Calu3 (cell line): ENCODE measurements at regions of chrX and their contacts with region 1.

Region 1: GRCh38 chrX:110204986-110205385 is 112.9 kb downstream of the AMMECR1 start:
- DNase-seq: no peak
- H3K4me3 Mint-ChIP-seq: no peak overlapping the region
- H3K27ac Mint-ChIP-seq: no peak overlapping the region
- H3K4me1 Mint-ChIP-seq: peaks cover 13% of the 10 kb centered on the region
- H3K27me3 Mint-ChIP-seq: no peaks in the 10 kb centered on the region
- CTCF ChIP-seq: no peak

Region 2: DNA sequence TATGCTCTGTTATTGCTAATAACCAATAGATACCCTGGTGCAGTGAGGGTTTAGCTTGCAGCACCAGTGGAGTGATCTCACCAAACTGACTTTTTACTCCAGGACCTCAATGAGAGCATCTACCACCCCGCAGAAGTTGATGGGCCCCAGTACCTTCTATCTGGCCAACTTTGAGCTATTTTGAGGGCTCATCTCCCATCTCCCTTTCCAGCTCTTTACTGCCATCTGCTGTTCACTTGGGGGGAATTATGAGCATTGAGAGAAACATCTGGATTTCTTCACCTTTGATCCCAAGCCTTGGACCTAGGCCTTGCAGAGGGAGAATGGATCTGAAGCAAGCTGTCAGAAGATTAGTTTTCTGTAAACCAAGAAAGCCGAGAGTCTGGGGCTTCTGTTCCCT is 58.5 kb before region 1 on chrX:
- CTCF ChIA-PET with region 1: no interaction called
- intact Hi-C with region 1: no loop called
- DNase-seq: peak; percentile 28
- H3K4me3 Mint-ChIP-seq: no peak overlapping the region
- H3K27ac Mint-ChIP-seq: no peak overlapping the region
- H3K4me1 Mint-ChIP-seq: peaks cover 6% of the 10 kb centered on the region
- H3K27me3 Mint-ChIP-seq: no peaks in the 10 kb centered on the region
- CTCF ChIP-seq: no peak

Region 3: GRCh38 chrX:110267874-110268273 is 62.9 kb after region 1 on chrX:
- CTCF ChIA-PET with region 1: no interaction called
- intact Hi-C with region 1: loop called (anchors 2 kb)
- DNase-seq: no peak
- H3K4me3 Mint-ChIP-seq: no peak overlapping the region
- H3K27ac Mint-ChIP-seq: no peak overlapping the region
- H3K4me1 Mint-ChIP-seq: peaks cover 14% of the 10 kb centered on the region
- H3K27me3 Mint-ChIP-seq: no peaks in the 10 kb centered on the region
- CTCF ChIP-seq: no peak

Region 4: GRCh38 chrX:110287605-110288004 is 82.6 kb after region 1 on chrX:
- CTCF ChIA-PET with region 1: no interaction called
- intact Hi-C with region 1: no loop called
- DNase-seq: no peak
- H3K4me3 Mint-ChIP-seq: no peak overlapping the region
- H3K27ac Mint-ChIP-seq: no peak overlapping the region
- H3K4me1 Mint-ChIP-seq: peaks cover 38% of the 10 kb centered on the region
- H3K27me3 Mint-ChIP-seq: no peaks in the 10 kb centered on the region
- CTCF ChIP-seq: no peak